ENCODE measurements at regions of chr22 and their contacts with region 1.

Region 1: DNA sequence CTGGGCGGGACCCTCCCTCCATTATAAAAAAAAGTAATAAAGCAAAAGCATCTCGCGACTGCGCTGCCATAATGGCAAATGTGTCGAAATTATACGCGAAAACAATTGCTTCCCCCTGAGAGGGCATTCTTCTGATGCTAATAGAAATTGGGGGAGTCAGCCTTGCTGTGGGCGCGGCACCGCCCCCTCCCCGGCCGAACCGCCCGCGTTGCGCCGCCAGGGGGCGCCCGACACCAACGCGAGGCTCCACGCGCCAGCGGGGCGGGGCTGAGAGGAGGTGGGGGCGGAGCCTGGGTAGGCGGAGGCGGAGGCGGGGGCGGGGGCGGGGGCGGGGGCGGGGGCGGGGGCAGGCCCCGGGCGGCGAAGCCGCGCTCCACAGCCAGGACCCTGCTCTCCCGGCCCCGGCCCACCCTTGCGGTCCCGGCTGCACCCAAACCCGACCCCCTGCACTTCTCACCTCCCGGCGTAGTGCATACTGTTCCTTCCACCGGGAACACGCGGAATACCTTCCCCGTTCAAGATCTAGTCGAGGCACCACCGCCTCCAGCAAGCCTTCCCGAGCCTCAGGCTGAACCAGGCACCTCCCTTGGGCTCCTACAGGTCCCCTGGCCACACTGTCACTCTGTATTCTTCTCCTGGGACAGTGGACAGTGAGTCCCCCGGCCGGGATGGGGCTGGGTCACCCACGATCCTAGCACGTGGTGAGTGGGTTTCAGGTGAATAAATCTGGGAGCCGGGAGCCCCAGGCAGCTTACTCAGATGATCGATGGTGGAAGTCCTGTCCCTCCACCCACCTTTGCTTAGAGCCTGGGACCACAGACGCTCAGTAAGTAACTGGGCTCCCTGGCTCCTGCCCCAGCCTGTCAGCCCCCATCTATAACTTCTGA is 15.5 kb upstream of the UPK3A start:
- DNase-seq: peak; percentile 84 to 97 (median 92)
- ATAC-seq: peak; percentile 97
- H3K4me3 ChIP-seq: peak overlapping the region; percentile 59 to 67
- H3K4me3 Mint-ChIP-seq: peak overlapping the region; percentile 83
- H3K27ac ChIP-seq: no peak overlapping the region
- H3K27ac Mint-ChIP-seq: no peak overlapping the region
- H3K4me1 ChIP-seq: peaks cover 10% of the 10 kb centered on the region
- H3K4me1 Mint-ChIP-seq: peaks cover 9% of the 10 kb centered on the region
- H3K27me3 ChIP-seq: peaks cover 0 to 8% of the 10 kb centered on the region in 2 experiments
- H3K27me3 Mint-ChIP-seq: peaks cover 6% of the 10 kb centered on the region
- CTCF ChIP-seq: peak; percentile 85

Region 2: GRCh38 chr22:45240810-45241631 is 28.2 kb before region 1 on chr22 and contains the start of gene KIAA0930:
- CTCF ChIA-PET with region 1: interaction called, 3 read pairs
- POLR2A ChIA-PET with region 1: no interaction called
- intact Hi-C with region 1: loop called (anchors 1 kb)
- DNase-seq: peak; percentile 73 to 93 (median 82)
- ATAC-seq: peak; percentile 75
- H3K4me3 ChIP-seq: peak within 1 kb of the TSS; percentile 70 to 76
- H3K4me3 Mint-ChIP-seq: peak within 1 kb of the TSS; percentile 91
- H3K27ac ChIP-seq: peak within 1 kb of the TSS; percentile 20 to 75
- H3K27ac Mint-ChIP-seq: peak within 1 kb of the TSS; percentile 87
- H3K4me1 ChIP-seq: peaks cover 28% of the 10 kb centered on the region
- H3K4me1 Mint-ChIP-seq: peaks cover 47% of the 10 kb centered on the region
- H3K27me3 ChIP-seq: no peaks in the 10 kb centered on the region
- H3K27me3 Mint-ChIP-seq: no peaks in the 10 kb centered on the region
- CTCF ChIP-seq: no peak
- total RNA-seq, gene KIAA0930: 6.6 to 11.7 TPM

Region 3: GRCh38 chr22:45344334-45344733 is 75.1 kb after region 1 on chr22:
- CTCF ChIA-PET with region 1: no interaction called
- POLR2A ChIA-PET with region 1: no interaction called
- intact Hi-C with region 1: loop called in 1 of 2 experiments (anchors 5 kb)
- DNase-seq: no peak
- ATAC-seq: no peak
- H3K4me3 ChIP-seq: no peak overlapping the region
- H3K4me3 Mint-ChIP-seq: no peak overlapping the region
- H3K27ac ChIP-seq: no peak overlapping the region
- H3K27ac Mint-ChIP-seq: peak overlapping the region; percentile 52
- H3K4me1 ChIP-seq: peaks cover 19% of the 10 kb centered on the region
- H3K4me1 Mint-ChIP-seq: peaks cover 24% of the 10 kb centered on the region
- H3K27me3 ChIP-seq: no peaks in the 10 kb centered on the region
- H3K27me3 Mint-ChIP-seq: no peaks in the 10 kb centered on the region
- CTCF ChIP-seq: no peak

Region 4: GRCh38 chr22:45435544-45436139 is 166.4 kb after region 1 on chr22:
- CTCF ChIA-PET with region 1: interaction called, 17 read pairs
- POLR2A ChIA-PET with region 1: no interaction called
- intact Hi-C with region 1: loop called (anchors 1 kb)
- DNase-seq: peak; percentile 57 to 89 (median 83)
- ATAC-seq: peak; percentile 97
- H3K4me3 ChIP-seq: no peak overlapping the region
- H3K4me3 Mint-ChIP-seq: no peak overlapping the region
- H3K27ac ChIP-seq: no peak overlapping the region
- H3K27ac Mint-ChIP-seq: peak overlapping the region; percentile 10
- H3K4me1 ChIP-seq: peaks cover 6% of the 10 kb centered on the region
- H3K4me1 Mint-ChIP-seq: peaks cover 12% of the 10 kb centered on the region
- H3K27me3 ChIP-seq: no peaks in the 10 kb centered on the region
- H3K27me3 Mint-ChIP-seq: no peaks in the 10 kb centered on the region
- CTCF ChIP-seq: peak; percentile 95

Region 5: GRCh38 chr22:45553351-45554039 is 284.3 kb after region 1 on chr22:
- CTCF ChIA-PET with region 1: interaction called, 7 read pairs
- POLR2A ChIA-PET with region 1: no interaction called
- intact Hi-C with region 1: loop called in 1 of 2 experiments (anchors 1 kb)
- DNase-seq: peak in 8 of 9 experiments; percentile 22 to 60 (median 51)
- ATAC-seq: no peak
- H3K4me3 ChIP-seq: no peak overlapping the region
- H3K4me3 Mint-ChIP-seq: no peak overlapping the region
- H3K27ac ChIP-seq: no peak overlapping the region
- H3K27ac Mint-ChIP-seq: no peak overlapping the region
- H3K4me1 ChIP-seq: no peaks in the 10 kb centered on the region
- H3K4me1 Mint-ChIP-seq: no peaks in the 10 kb centered on the region
- H3K27me3 ChIP-seq: no peaks in the 10 kb centered on the region
- H3K27me3 Mint-ChIP-seq: peaks cover 4% of the 10 kb centered on the region
- CTCF ChIP-seq: peak; percentile 52

Region 6: DNA sequence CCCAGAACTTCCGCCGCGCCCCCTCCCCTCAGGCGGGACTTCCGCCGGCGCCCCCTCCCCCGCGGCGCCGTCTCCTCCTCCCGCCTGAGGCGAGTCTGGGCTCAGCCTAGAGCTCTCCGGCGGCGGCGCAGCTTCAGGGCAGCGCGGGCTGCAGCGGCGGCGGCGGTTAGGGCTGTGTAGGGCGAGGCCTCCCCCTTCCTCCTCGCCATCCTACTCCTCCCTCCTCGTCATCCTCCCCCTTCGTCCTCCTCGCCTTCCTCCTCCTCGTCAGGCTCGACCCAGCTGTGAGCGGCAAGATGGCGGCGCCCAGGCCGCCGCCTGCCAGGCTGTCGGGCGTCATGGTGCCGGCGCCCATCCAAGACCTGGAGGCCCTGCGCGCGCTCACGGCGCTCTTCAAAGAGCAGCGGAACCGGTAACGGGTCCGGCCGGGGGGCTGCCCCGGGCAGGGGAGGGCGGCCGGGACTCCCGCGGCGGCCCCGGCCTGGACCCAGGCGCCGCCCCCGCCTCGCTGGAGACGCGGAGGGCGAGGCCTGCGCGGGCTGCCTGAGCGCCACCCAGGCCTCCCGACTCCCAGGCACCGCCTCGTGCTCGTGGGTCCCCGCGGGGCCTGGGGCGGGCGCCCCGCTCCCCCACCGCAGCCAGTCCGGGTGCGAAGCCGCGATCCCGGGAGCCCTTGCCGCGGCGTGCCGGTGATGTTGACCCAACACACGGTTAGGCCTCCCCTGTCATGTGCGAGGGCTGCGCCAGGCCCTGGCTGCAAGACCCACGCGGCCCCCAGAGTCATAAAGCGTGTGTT is 402.8 kb after region 1 on chr22 and contains the start of gene ATXN10:
- CTCF ChIA-PET with region 1: no interaction called
- POLR2A ChIA-PET with region 1: no interaction called
- intact Hi-C with region 1: loop called in 1 of 2 experiments (anchors 10 kb)
- DNase-seq: peak; percentile 33 to 81 (median 60)
- ATAC-seq: peak; percentile 76
- H3K4me3 ChIP-seq: peak within 1 kb of the TSS; percentile 58 to 64
- H3K4me3 Mint-ChIP-seq: peak within 1 kb of the TSS; percentile 90
- H3K27ac ChIP-seq: peak within 1 kb of the TSS; percentile 52 to 60
- H3K27ac Mint-ChIP-seq: peak within 1 kb of the TSS; percentile 92
- H3K4me1 ChIP-seq: peaks cover 27% of the 10 kb centered on the region
- H3K4me1 Mint-ChIP-seq: peaks cover 44% of the 10 kb centered on the region
- H3K27me3 ChIP-seq: no peaks in the 10 kb centered on the region
- H3K27me3 Mint-ChIP-seq: peaks cover 3% of the 10 kb centered on the region
- CTCF ChIP-seq: no peak
- total RNA-seq, gene ATXN10: 35.4 to 37.7 TPM

Measured in CD8-positive, alpha-beta T cell (primary cell).